Activated CD8-positive, alpha-beta memory T cell treated with anti-CD3 and anti-CD28 coated beads, Interleukin-2, amount 10 ng/mL, durations not matched to agents 7 days and 5 days (primary cell): ENCODE measurements at regions of chr3 and their contacts with region 1.

Region 1: GRCh38 chr3:123559040-123559861 is 25.6 kb downstream of the HACD2 start:
- DNase-seq: no peak
- ATAC-seq: no peak
- H3K4me3 Mint-ChIP-seq: no peak overlapping the region
- H3K27ac Mint-ChIP-seq: no peak overlapping the region
- H3K4me1 Mint-ChIP-seq: peaks cover 8% of the 10 kb centered on the region
- H3K27me3 Mint-ChIP-seq: no peaks in the 10 kb centered on the region

Region 2: GRCh38 chr3:123328851-123329635 is 230.2 kb before region 1 on chr3:
- CTCF ChIA-PET with region 1: interaction called, 32 read pairs
- DNase-seq: peak; percentile 77
- ATAC-seq: peak; percentile 81
- H3K4me3 Mint-ChIP-seq: no peak overlapping the region
- H3K27ac Mint-ChIP-seq: no peak overlapping the region
- H3K4me1 Mint-ChIP-seq: no peaks in the 10 kb centered on the region
- H3K27me3 Mint-ChIP-seq: no peaks in the 10 kb centered on the region

Region 3: DNA sequence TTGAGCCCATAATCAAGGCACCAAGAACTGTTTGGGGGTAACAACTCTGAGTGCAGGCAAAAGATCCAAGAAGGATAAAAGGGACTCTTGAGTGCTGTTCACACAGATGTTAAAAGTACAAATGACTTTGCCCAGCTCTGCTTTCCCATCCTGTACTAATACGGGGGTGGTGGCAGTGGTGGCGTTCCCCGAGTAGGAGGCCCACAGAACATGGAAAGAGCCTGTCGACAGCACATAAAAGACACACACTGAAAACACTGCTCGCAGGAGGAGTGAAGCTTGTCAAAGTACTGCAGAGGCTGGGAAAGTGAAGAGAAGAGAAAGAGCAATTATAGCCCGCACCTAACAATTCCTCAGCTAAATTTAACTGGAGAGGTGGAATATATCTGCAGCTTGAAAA is 15.3 kb before region 1 on chr3:
- CTCF ChIA-PET with region 1: interaction called, 10 read pairs
- DNase-seq: no peak
- ATAC-seq: no peak
- H3K4me3 Mint-ChIP-seq: no peak overlapping the region
- H3K27ac Mint-ChIP-seq: no peak overlapping the region
- H3K4me1 Mint-ChIP-seq: peaks cover 4% of the 10 kb centered on the region
- H3K27me3 Mint-ChIP-seq: no peaks in the 10 kb centered on the region

Region 4: GRCh38 chr3:123582315-123582714 is 23.1 kb after region 1 on chr3:
- CTCF ChIA-PET with region 1: interaction called, 10 read pairs
- DNase-seq: no peak
- ATAC-seq: no peak
- H3K4me3 Mint-ChIP-seq: no peak overlapping the region
- H3K27ac Mint-ChIP-seq: no peak overlapping the region
- H3K4me1 Mint-ChIP-seq: peaks cover 25% of the 10 kb centered on the region
- H3K27me3 Mint-ChIP-seq: no peaks in the 10 kb centered on the region

Region 5: GRCh38 chr3:123807820-123808219 is 248.6 kb after region 1 on chr3:
- CTCF ChIA-PET with region 1: no interaction called
- DNase-seq: no peak
- ATAC-seq: no peak
- H3K4me3 Mint-ChIP-seq: no peak overlapping the region
- H3K27ac Mint-ChIP-seq: no peak overlapping the region
- H3K4me1 Mint-ChIP-seq: no peaks in the 10 kb centered on the region
- H3K27me3 Mint-ChIP-seq: peaks cover under 1% of the 10 kb centered on the region